ENCODE measurements at regions of chr2 and their contacts with region 1.

Region 1: GRCh38 chr2:144567745-144568144 is 47.8 kb upstream of the ZEB2 start:
- DNase-seq: no peak
- ATAC-seq: no peak
- H3K4me3 Mint-ChIP-seq: no peak overlapping the region
- H3K27ac Mint-ChIP-seq: no peak overlapping the region
- H3K4me1 Mint-ChIP-seq: peaks cover 17% of the 10 kb centered on the region
- H3K27me3 Mint-ChIP-seq: peaks cover 11% of the 10 kb centered on the region

Region 2: DNA sequence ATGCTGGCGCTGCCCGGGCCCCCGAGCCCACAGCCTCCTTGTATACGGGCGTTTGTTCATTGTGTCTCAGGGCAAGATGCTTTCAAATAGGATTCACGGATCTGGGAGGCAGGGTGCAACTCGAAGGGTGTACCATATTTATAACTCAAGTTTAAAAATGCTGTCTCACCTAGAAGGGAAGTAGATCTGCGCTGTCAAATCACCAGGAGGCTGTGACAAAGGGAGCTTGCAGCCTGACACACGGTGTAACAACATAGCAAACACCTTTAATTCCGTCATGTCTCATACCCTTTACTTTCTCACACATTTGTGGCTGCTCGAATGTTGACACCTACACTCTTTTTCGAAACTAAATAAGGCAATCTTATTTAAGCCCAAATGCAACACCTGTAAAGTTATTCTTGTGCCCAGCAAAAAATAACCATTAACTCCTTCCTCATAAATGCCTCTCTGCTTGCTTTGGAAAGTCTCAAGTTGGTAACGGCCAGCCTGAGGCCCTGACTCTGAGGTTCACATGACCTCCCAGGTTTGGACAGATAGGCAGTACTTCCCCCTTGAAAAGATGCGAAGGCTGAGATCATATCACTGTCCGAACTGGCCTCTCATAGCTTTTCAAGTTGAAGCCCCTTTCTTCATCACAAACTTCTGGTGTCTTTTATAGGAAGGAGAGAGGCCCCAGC is 59.4 kb before region 1 on chr2:
- CTCF ChIA-PET with region 1: no interaction called
- POLR2A ChIA-PET with region 1: interaction called, 10 read pairs
- intact Hi-C with region 1: no loop called
- DNase-seq: no peak
- ATAC-seq: no peak
- H3K4me3 Mint-ChIP-seq: no peak overlapping the region
- H3K27ac Mint-ChIP-seq: no peak overlapping the region
- H3K4me1 Mint-ChIP-seq: peaks cover 16% of the 10 kb centered on the region
- H3K27me3 Mint-ChIP-seq: peaks cover 46% of the 10 kb centered on the region